Motor neuron (in vitro differentiated cells): ENCODE measurements at regions of chr7 and their contacts with region 1.

Region 1: GRCh38 chr7:42690794-42691639 is 220.9 kb downstream of the C7orf25 start:
- ATAC-seq: peak; percentile 36 to 96 (median 56)
- H3K4me3 ChIP-seq: no peak overlapping the region
- H3K27ac ChIP-seq: no peak overlapping the region
- H3K4me1 ChIP-seq: peaks cover 9 to 18% of the 10 kb centered on the region in 2 donors

Region 2: DNA sequence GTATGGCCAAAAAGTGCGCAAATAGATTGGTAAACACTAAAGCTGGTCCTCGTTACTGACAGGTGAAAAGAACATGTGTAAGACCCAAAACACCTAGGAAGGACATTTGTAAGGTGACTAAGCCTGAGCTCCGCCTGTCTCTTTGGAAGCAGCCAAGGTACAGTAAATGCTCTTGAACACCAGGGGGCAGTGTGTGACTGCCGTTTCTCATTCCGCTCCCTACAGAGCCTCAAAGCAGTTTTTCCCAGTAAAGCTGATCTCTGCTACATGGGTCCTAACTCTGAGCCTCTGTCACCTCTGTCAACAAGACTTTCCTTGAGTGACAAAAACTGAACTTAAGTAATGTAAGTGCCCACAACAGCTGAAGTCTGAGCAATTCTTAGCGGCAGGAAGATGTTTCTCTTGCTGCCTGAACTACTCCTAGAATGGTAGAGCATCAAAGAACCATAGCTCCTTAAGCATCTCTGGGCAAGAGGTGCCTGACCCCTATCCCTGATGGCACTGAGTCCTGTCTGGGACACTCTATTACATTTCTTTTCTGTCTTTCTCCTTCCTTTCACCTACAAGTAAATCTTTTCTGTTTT is 750.2 kb before region 1 on chr7:
- in situ Hi-C with region 1: loop called in 1 of 9 experiments (anchors 25 kb)
- ATAC-seq: peak; percentile 79 to 89 (median 82)
- H3K4me3 ChIP-seq: no peak overlapping the region
- H3K27ac ChIP-seq: no peak overlapping the region
- H3K4me1 ChIP-seq: no peaks in the 10 kb centered on the region

Region 3: DNA sequence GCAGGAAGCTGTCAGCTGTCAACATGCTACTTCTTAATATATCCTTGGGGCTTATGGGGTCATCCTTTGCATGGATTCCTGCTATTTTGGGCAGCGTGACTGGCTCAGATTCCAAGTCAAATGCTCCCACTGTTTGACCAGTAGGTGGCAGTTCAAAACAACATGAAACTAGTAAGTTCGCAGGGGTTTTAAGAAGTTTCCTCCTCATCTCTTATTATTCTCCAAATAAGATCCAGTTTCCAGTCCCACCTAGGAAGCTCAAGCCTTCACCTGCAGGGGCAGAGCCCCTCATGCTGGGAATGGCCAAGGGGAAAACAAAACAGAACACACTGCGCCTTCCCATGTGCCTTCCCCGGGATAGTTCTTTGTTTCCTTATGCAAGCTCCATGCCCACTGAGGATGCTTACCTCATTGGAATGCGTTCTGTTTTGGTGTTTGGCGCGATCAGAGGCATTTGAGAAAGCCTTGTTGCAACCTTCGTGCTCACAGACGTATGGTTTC is 713.8 kb before region 1 on chr7:
- in situ Hi-C with region 1: loop called in 2 of 9 experiments (anchors 25 kb)
- ATAC-seq: peak in 6 of 8 experiments; percentile 29 to 65 (median 50)
- H3K4me3 ChIP-seq: no peak overlapping the region
- H3K27ac ChIP-seq: no peak overlapping the region
- H3K4me1 ChIP-seq: no peaks in the 10 kb centered on the region

Region 4: GRCh38 chr7:42272793-42273665 is 418.0 kb before region 1 on chr7:
- in situ Hi-C with region 1: loop called in 1 of 9 experiments (anchors 25 kb)
- ATAC-seq: peak in 5 of 8 experiments; percentile 28 to 97 (median 94)
- H3K4me3 ChIP-seq: no peak overlapping the region
- H3K27ac ChIP-seq: no peak overlapping the region
- H3K4me1 ChIP-seq: no peaks in the 10 kb centered on the region

Region 5: GRCh38 chr7:42993038-42993437 is 302.0 kb after region 1 on chr7:
- in situ Hi-C with region 1: no loop called
- ATAC-seq: no peak
- H3K4me3 ChIP-seq: no peak overlapping the region
- H3K27ac ChIP-seq: no peak overlapping the region
- H3K4me1 ChIP-seq: peaks cover 7 to 8% of the 10 kb centered on the region in 2 donors